ENCODE measurements at regions of chr10 and their contacts with region 1.

Region 1: DNA sequence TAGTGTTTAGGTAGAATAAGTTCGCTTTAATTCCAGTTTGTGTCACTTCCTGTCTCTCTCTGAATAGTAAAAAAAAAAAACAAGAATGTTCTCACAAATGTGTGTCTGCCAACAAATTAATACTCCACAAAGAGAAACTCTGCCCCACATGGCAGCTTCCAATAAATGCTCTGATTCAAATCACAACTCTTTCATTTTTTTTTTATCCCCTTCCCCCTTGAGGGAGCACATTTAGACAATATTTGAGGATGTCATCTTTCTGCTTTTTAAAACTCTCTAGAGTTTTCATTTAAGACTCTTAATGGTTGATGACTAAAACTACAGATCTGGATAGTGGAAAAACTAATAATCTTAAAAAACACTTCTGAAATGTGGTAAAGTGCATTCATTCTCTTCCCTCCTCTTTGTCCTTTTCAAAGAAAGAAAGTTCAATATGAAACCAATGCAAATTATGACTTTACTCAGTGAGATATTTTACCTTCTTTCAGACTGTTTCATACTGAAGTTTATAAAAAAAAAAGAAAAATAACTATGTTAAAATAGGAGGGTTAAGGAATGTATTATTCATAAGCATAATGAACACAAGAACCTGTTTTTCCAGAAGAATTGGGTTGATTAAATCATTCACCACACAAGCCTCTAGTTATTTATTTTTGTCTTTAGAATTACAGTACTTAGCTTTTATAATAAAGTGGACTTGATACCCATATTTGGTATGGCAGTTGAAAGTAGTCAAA is 42.3 kb downstream of the ARID5B start:
- DNase-seq: no peak
- H3K4me3 Mint-ChIP-seq: peak overlapping the region; percentile 47
- H3K27ac Mint-ChIP-seq: peak overlapping the region; percentile 93
- H3K4me1 Mint-ChIP-seq: peaks cover 47% of the 10 kb centered on the region
- H3K27me3 Mint-ChIP-seq: no peaks in the 10 kb centered on the region

Region 2: DNA sequence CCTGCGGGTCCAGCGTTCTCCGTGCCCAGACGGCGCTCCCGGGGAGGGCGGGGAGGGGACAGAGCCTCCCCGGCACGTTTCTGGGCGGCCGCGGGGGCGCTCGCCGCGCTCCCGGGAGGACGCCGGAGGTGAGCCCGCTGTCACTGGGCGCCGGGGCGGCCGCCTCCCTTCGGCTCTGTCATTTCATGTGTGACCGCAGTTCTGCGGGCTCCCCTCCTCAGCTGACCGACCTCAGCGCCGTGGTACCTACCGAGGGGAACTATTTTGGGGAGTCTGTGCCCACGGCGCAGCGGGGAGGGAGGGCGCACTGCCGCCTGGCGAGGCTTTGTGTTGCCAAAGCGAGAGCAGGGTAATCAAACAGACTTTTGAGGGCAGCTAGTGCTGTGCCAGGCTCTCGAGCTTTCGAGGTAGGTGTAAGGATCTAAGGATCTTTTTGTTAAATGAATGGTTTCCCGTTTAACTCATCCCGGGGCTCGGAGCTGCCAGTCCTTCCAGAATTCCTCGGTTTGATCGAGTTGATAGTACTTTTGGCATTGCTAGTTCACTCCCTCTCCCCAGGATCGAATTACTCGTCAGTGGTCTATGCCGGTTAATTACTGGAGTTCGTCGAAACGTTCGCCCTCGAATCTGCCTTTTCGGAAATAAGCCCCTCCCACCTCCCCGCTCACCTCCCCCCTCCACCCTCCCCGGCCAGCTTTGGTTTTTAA is 40.5 kb before region 1 on chr10:
- intact Hi-C with region 1: loop called (anchors 1 kb)
- DNase-seq: peak; percentile 68
- H3K4me3 Mint-ChIP-seq: peak overlapping the region; percentile 95
- H3K27ac Mint-ChIP-seq: peak overlapping the region; percentile 93
- H3K4me1 Mint-ChIP-seq: peaks cover 40% of the 10 kb centered on the region
- H3K27me3 Mint-ChIP-seq: no peaks in the 10 kb centered on the region

Region 3: DNA sequence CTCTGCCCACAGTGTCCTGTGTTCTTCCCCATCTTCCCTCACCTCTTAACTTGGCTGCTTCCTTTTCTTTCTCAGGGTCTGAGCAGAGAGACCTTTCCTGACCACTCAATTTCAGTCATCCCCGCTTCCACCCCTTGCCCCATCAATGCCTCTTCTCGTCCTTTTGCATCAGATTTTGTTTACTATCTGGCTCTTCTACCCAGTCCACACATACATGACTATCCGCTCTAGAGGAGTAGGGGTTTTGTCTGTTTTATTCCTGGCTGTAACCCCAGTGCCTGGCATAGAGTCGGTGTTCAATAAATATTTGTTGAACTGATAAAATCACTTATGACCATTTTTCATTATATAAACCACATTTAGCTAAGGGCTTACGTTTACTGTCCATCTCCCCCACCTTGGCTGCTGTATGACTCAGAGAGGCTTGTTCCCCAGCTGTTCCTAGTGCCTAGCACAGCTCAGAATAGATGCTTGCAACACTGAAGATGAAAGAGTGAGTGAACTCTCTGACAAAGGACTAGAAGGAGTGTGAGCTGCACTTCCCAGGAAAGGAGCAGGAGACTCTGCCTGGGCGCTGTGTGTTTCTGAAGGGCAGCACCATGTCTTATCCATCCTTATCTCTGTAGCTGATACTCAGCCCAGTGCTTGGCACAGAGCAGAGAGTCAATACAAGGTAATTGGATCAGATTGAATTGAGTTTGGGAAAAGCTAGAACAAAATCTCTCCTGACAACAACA is 20.5 kb before region 1 on chr10:
- intact Hi-C with region 1: no loop called
- DNase-seq: no peak
- H3K4me3 Mint-ChIP-seq: no peak overlapping the region
- H3K27ac Mint-ChIP-seq: no peak overlapping the region
- H3K4me1 Mint-ChIP-seq: peaks cover 22% of the 10 kb centered on the region
- H3K27me3 Mint-ChIP-seq: no peaks in the 10 kb centered on the region

Region 4: GRCh38 chr10:61987951-61988379 is 44.1 kb after region 1 on chr10:
- intact Hi-C with region 1: loop called (anchors 1 kb)
- DNase-seq: peak; percentile 36
- H3K4me3 Mint-ChIP-seq: peak overlapping the region; percentile 46
- H3K27ac Mint-ChIP-seq: peak overlapping the region; percentile 90
- H3K4me1 Mint-ChIP-seq: peaks cover 67% of the 10 kb centered on the region
- H3K27me3 Mint-ChIP-seq: no peaks in the 10 kb centered on the region

Region 5: DNA sequence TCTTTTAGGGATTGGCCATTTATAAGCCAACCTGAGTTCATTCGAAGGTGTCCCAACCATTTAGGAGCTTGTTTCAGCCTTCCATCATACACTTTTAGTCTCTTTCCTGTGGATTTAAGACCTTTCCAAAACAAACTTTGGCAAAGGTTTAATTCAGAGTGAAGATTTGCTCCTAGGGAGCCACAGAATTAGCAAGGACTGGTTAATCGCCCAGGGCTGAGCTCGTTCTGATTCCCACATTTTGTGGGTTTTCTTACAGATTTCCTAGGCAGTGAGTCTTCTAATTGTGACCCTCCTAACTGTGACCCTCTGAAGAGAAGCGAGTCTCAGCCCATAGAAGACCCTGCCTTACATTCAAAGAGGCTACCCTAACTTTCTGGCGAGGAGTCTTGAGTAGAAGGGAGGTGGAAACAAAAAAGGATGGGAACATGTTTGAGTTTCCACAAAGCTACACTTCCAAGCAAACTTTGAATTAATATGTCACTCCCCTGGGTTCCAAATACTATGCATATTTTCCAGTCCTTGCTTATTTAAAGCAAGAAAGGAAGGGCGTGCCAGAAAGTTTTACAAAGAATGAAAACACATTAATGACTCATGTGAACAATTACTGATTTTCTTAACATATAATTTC is 76.0 kb after region 1 on chr10:
- intact Hi-C with region 1: loop called (anchors 1 kb)
- DNase-seq: no peak
- H3K4me3 Mint-ChIP-seq: no peak overlapping the region
- H3K27ac Mint-ChIP-seq: no peak overlapping the region
- H3K4me1 Mint-ChIP-seq: peaks cover 42% of the 10 kb centered on the region
- H3K27me3 Mint-ChIP-seq: no peaks in the 10 kb centered on the region

Region 6: DNA sequence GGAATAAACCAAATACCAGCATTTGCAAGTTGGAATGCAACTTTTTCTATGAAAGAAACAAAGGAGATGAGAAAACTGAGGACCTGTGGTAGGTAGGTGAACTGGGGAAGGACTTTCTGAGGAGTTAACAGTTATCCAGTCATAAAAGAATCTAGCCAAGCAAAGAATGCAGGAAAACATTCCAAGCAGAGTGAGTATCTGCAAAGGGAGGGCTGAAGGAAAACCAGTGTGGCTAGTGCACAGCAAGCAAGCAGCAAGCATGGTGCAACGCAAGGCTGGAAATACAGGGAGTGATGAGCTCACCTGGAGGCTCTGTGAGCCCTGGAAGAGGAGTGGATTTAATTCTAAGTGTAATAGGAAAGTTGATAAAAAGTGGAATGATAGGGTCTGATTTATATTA is 280.8 kb after region 1 on chr10:
- intact Hi-C with region 1: loop called (anchors 1 kb)
- DNase-seq: no peak
- H3K4me3 Mint-ChIP-seq: no peak overlapping the region
- H3K27ac Mint-ChIP-seq: no peak overlapping the region
- H3K4me1 Mint-ChIP-seq: peaks cover 9% of the 10 kb centered on the region
- H3K27me3 Mint-ChIP-seq: no peaks in the 10 kb centered on the region

Region 7: GRCh38 chr10:62384057-62384446 is 440.2 kb after region 1 on chr10:
- intact Hi-C with region 1: loop called (anchors 5 kb)
- DNase-seq: peak; percentile 55
- H3K4me3 Mint-ChIP-seq: no peak overlapping the region
- H3K27ac Mint-ChIP-seq: peak overlapping the region; percentile 60
- H3K4me1 Mint-ChIP-seq: peaks cover 27% of the 10 kb centered on the region
- H3K27me3 Mint-ChIP-seq: peaks cover 54% of the 10 kb centered on the region

Region 8: GRCh38 chr10:62858364-62858763 is 914.5 kb after region 1 on chr10:
- intact Hi-C with region 1: loop called (anchors 1 kb)
- DNase-seq: no peak
- H3K4me3 Mint-ChIP-seq: no peak overlapping the region
- H3K27ac Mint-ChIP-seq: no peak overlapping the region
- H3K4me1 Mint-ChIP-seq: peaks cover 78% of the 10 kb centered on the region
- H3K27me3 Mint-ChIP-seq: no peaks in the 10 kb centered on the region

Measured in activated T-helper 2 cell treated with anti-CD3 and anti-CD28 coated beads, Interferon-gamma antibody, Interleukin-2, Interleukin-4, amounts not matched to agents 10 μg/mL and 5 μg/mL and 100 μg/mL, durations not matched to agents 14 hours and 24 hours and 36 hours (primary cell).